HepG2 (cell line): ENCODE measurements at regions of chr3 and their contacts with region 1.

Region 1: DNA sequence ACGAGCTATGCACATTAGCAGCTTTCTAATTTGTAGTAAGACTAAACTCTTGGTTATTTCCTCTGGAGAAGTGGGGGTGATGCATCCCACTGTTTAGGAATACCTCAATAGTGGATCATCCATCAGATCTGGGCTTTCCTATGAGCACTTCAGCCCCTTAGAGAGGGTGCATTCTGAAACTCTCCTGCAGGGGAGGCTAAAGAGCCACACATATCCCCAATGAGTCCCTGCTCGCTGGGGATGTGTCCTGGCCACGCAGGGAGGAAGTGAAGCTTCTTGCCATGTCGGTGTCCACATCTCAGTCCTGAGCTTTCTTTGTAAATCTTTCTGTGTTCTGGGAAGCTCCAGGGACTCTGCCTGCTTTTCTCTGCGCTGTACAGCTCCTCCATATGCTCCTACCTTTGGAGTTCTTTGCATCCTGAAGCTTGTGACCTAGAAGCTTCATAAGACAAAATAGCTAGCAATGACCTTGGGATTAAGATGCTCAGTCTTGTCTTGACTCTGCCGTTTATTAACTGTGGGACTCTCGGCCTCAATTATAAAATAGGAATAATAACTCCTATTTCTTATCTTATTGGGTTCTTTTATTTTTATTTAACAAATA is 28.3 kb upstream of the MASP1 start:
- DNase-seq: peak; percentile 35
- ATAC-seq: peak; percentile 94
- H3K4me3 ChIP-seq: no peak overlapping the region
- H3K27ac ChIP-seq: no peak overlapping the region
- H3K4me1 ChIP-seq: no peaks in the 10 kb centered on the region
- H3K27me3 ChIP-seq: 0 out of 5 replicates have a peak, but pooled peaks cover 0 to 5% of the 10 kb centered on the region in 2 experiments
- CTCF ChIP-seq: peak; percentile 70
- EP300 ChIP-seq: no peak
- POLR2A ChIP-seq: no peak
- RAD21 ChIP-seq: peak; percentile 54

Region 2: DNA sequence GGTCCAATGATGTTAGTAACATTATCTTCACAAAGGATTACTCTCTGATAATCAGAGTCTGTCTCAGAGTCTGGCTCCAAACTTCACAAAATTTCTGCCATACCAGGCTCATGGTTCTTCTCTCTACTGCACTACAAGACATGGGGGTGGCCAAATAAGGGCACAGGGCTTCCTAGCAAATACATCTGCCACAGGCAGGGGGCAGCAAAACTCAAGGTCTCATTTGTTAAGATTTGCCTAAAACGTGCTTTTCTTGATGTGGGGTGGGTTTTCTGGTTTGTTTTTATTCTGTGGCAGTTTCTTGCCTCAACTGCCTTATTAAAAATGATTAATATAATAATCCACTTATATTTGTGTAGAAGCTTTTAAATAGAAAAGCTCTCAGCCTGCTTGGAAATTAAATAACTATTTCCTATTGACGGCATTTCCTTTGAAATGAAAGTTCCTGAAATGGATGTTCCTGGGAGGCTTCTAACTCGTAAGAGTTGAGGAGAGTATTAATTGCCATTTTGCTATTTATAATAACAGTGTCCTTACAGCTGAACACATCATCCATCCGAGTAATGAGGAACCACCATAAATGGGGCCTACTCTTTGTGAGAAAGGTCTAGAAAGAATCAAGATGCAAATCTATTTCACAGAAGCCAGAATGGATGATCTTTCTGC is 296.6 kb after region 1 on chr3:
- CTCF ChIA-PET with region 1: no interaction called
- POLR2A ChIA-PET with region 1: no interaction called
- in situ Hi-C with region 1: no loop called
- intact Hi-C with region 1: loop called (anchors 1 kb)
- DNase-seq: peak; percentile 35
- ATAC-seq: peak; percentile 79
- H3K4me3 ChIP-seq: no peak overlapping the region
- H3K27ac ChIP-seq: no peak overlapping the region
- H3K4me1 ChIP-seq: no peaks in the 10 kb centered on the region
- H3K27me3 ChIP-seq: no peaks in the 10 kb centered on the region
- CTCF ChIP-seq: peak; percentile 74
- EP300 ChIP-seq: no peak
- POLR2A ChIP-seq: no peak
- RAD21 ChIP-seq: peak; percentile 38; the same call in 1 of the 2 replicates

Region 3: GRCh38 chr3:187714404-187714979 is 394.7 kb after region 1 on chr3:
- CTCF ChIA-PET with region 1: interaction called, 21 read pairs
- POLR2A ChIA-PET with region 1: no interaction called
- in situ Hi-C with region 1: loop called (anchors 10 kb)
- intact Hi-C with region 1: loop called (anchors 1 kb)
- DNase-seq: peak; percentile 74
- ATAC-seq: peak; percentile 84
- H3K4me3 ChIP-seq: peak overlapping the region in 2 of 3 experiments; percentile 35 to 51; a peak in 4 of 6 replicates
- H3K27ac ChIP-seq: no peak overlapping the region
- H3K4me1 ChIP-seq: peaks cover 30% of the 10 kb centered on the region
- H3K27me3 ChIP-seq: no peaks in the 10 kb centered on the region
- CTCF ChIP-seq: peak; percentile 95
- EP300 ChIP-seq: no peak
- POLR2A ChIP-seq: no peak
- RAD21 ChIP-seq: peak; percentile 87

Region 4: GRCh38 chr3:189233225-189233858 is 1913.5 kb after region 1 on chr3:
- CTCF ChIA-PET with region 1: no interaction called
- POLR2A ChIA-PET with region 1: no interaction called
- in situ Hi-C with region 1: no loop called
- intact Hi-C with region 1: loop called (anchors 2 kb)
- DNase-seq: peak; percentile 39
- ATAC-seq: peak; percentile 91
- H3K4me3 ChIP-seq: no peak overlapping the region
- H3K27ac ChIP-seq: no peak overlapping the region
- H3K4me1 ChIP-seq: no peaks in the 10 kb centered on the region
- H3K27me3 ChIP-seq: no peaks in the 10 kb centered on the region
- CTCF ChIP-seq: peak; percentile 80
- EP300 ChIP-seq: no peak
- POLR2A ChIP-seq: no peak
- RAD21 ChIP-seq: no peak